ENCODE measurements at regions of chr6 and their contacts with region 1.

Region 1: DNA sequence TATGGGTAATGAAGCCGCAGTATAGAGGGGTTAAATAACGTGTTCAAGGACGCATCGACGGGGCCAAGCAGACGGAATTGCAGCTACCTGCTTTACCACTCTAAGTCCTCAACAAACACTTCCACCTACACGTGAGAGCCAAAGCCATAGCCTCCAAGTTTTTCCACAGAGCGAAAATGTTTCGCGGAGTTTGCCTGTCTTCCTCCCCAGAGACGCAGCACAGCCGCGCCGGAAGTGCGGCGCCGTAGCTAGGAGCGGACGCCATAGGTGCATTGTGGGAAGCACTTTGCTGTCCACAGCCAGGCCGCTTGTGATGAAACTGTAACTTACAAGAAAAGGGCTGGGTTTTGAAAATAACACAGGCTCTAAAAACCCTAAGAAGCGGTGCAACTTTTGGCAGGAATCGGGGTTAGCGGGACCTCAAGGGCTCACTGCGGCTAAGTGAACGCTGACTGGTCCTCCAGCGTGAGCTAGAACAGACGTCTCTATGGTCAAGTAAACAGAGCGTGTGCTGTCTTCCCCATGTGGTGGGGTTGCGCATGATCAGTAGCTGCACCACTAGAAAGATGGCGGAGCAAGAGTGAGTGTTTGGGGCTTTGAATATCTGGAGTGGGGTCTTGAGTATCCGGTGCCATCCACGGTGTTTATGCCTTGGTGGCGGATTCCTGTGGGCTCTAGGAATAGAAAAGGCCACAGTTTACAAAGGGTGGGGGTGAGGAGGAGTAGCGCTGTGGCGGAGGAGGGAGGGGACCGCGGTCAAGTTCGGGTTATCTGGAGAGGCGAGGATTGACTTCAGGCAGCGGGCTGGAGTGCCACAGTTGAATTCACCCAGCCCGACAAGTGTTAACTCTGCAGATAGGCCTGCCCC is at the start of gene RPL7L1:
- ATAC-seq: peak; percentile 86 to 98 (median 97)
- H3K4me3 ChIP-seq: peak within 1 kb of the TSS; percentile 51 to 66 (median 58)
- H3K27ac ChIP-seq: peak within 1 kb of the TSS; percentile 93 to 95
- H3K4me1 ChIP-seq: peaks cover 8 to 10% of the 10 kb centered on the region in 2 donors
- total RNA-seq, gene RPL7L1: 69.1 to 186 (median 109) TPM

Region 2: DNA sequence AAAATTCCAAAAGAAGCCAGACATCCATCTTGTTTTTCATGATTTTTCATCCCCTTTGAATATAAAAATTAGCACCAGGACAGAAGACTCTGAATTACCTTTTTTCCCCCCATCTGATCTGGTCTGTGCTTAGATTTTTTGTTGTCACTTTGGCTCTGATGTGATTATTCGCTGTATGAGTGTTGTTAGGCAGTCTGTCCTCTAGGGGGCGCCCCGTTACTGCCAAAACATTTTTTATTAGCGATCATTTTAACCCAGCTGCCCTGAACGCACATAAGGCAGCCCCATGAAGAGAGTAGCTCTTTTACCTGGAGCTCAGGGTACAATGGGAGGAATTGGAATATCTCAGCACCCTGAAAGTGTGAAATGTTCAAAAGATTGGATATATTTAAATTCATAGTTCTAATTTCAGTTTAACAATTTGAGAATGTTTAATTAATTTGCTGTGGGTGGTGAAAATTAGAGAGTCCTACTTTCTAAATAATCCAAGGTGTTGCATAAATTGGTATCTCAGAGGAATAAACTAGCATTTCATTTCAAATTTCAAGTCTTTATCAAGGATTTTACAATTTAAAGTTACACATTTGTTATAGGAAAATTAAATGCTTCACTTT is 218.0 kb before region 1 on chr6:
- in situ Hi-C with region 1: loop called in 7 of 9 experiments (anchors 10 to 25 kb)
- ATAC-seq: peak; percentile 65 to 79 (median 70)
- H3K4me3 ChIP-seq: no peak overlapping the region
- H3K27ac ChIP-seq: no peak overlapping the region
- H3K4me1 ChIP-seq: no peaks in the 10 kb centered on the region

Region 3: DNA sequence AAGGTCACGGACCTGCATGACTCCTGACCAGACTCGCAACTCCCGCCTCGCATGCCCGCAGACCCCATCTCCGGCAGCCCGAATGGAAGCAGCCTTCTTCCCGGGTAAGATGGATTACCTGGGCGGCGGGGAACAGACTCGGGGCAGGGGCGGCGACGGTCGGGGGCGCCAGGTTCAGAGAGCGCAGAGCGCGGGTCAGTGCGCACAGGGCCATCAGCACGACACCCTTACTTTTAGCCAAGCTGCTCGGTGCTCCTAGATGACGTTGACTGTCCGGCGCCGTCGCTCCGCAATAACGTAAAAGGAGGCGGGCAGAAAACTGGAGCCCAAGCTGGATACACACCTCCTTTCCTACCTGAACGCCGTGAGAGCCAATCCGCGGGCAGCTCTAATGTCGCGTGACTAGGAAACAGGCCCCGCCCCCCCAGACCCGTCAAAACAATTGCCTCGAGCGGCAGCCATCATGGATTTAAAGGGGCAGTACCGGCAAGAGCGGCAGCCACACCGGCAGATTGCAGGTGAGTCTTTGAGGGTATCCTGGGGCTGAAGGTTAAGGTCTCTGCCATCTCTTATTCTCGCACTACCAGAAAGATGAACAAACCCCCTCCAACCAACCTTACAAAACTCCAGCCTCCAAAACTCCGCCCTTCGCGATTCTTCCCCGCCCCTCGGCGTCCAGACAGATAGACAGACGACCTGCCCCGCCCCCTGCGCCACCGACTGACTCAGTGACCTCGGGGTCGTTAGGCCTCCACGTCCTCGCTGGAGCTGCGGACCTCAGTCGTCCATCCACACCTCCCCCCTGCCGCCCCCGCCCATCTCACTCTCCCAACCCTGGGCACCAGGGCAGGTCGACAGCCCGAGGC is 179.8 kb after region 1 on chr6 and contains the starts of genes KLC4 and MRPL2:
- in situ Hi-C with region 1: no loop called
- ATAC-seq: peak; percentile 91 to 98 (median 93)
- H3K4me3 ChIP-seq: peak within 1 kb of the TSS; percentile 62 to 97 (median 80)
- H3K27ac ChIP-seq: peak within 1 kb of the TSS; percentile 86 to 95
- H3K4me1 ChIP-seq: peaks cover 15% of the 10 kb centered on the region in 2 donors
- total RNA-seq, gene KLC4: 18.7 to 57.3 (median 32.7) TPM
- total RNA-seq, gene MRPL2: 25.0 to 81.6 (median 42.7) TPM

Region 4: GRCh38 chr6:43247113-43247999 is 367.8 kb after region 1 on chr6:
- in situ Hi-C with region 1: no loop called
- ATAC-seq: peak; percentile 72 to 95 (median 83)
- H3K4me3 ChIP-seq: peak overlapping the region; percentile 39 to 52 (median 45)
- H3K27ac ChIP-seq: peak overlapping the region; percentile 43 to 88
- H3K4me1 ChIP-seq: peaks cover 26 to 32% of the 10 kb centered on the region in 2 donors

Measured in motor neuron (in vitro differentiated cells).